Colonic mucosa (tissue), 4 donors: ENCODE measurements at regions of chr7 and their contacts with region 1.

Region 1: GRCh38 chr7:16071246-16071857 is 350.0 kb downstream of the CRPPA start:
- DNase-seq: no peak
- H3K4me3 ChIP-seq: no peak overlapping the region
- H3K27ac ChIP-seq: no peak overlapping the region
- H3K4me1 ChIP-seq: no peaks in the 10 kb centered on the region
- H3K27me3 ChIP-seq: no peaks in the 10 kb centered on the region
- CTCF ChIP-seq: peak; percentile 83

Region 2: GRCh38 chr7:15303357-15303756 is 768.0 kb before region 1 on chr7:
- intact Hi-C with region 1: loop called (anchors 5 kb)
- DNase-seq: no peak
- H3K4me3 ChIP-seq: no peak overlapping the region
- H3K27ac ChIP-seq: no peak overlapping the region
- H3K4me1 ChIP-seq: no peaks in the 10 kb centered on the region
- H3K27me3 ChIP-seq: no peaks in the 10 kb centered on the region
- CTCF ChIP-seq: no peak

Region 3: DNA sequence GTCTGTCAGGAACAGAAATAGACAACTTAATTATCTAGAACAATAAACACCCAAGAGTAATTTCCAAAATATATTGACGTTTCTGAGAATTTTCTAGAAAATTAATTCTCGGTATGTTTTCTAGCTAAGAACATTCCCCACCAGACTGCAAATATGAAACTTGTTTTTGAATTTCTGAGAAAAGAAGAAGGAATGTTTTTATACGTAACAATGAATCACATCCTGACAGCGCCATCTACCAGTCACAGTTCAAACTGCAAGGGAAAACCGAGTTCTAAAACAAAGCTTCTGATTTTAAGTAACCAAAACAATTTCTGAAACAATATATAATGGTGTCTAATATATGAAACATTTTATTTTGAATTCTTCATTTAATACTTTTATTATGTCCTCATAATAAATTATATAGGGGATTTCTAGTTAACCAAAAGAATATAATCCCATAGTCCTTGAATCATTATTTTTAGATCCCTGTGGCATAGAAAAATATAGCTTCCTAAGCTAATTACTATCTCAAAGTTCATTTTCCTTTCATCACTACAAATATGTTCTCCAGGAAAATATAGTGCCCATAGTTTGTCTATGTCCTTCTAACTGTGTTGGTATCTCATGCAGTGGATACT is 350.4 kb before region 1 on chr7:
- intact Hi-C with region 1: loop called (anchors 5 kb)
- DNase-seq: peak; percentile 43
- H3K4me3 ChIP-seq: no peak overlapping the region
- H3K27ac ChIP-seq: no peak overlapping the region
- H3K4me1 ChIP-seq: no peaks in the 10 kb centered on the region
- H3K27me3 ChIP-seq: no peaks in the 10 kb centered on the region
- CTCF ChIP-seq: peak; percentile 75

Region 4: GRCh38 chr7:15885678-15886077 is 185.7 kb before region 1 on chr7:
- intact Hi-C with region 1: no loop called
- DNase-seq: no peak
- H3K4me3 ChIP-seq: no peak overlapping the region
- H3K27ac ChIP-seq: no peak overlapping the region
- H3K4me1 ChIP-seq: no peaks in the 10 kb centered on the region
- H3K27me3 ChIP-seq: no peaks in the 10 kb centered on the region
- CTCF ChIP-seq: no peak